CD4-positive, alpha-beta T cell (primary cell): ENCODE measurements at regions of chr1 and their contacts with region 1.

Region 1: DNA sequence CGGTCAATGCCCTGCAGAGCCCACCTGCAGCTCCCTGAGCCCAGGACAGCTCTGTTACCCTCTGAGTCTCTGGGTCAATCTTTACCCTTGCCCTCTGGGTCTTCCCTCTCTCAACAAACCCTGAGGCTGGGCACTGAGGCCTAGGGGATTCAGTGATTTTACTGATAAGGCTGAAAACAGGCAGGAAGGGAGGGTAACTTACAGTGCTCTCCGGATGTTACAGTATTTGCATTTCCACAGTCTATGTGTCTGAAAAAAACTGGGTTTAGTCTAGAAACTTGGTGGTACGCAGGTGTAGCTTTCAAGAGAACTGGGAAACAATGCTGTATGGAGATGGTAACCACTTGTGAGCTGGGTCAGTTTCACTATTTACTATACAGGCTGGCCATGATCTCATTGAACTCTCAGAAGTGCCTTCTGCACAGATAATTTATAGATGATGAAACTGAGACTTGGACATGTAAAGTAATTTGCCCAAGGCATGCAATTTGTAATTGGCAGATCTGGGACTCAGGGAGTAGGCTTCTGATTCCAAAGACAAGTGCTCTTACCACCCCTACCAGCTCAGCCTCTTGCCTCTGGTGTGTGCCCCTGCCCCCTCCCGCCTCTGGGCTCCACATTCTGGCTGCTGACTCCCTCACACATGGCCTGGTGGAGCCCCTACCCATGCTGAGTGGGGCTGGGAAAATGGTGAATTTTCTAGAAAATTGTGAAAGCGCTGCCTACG is 48.8 kb downstream of the TENT5C start:
- DNase-seq: peak in 3 of 14 experiments; percentile 43 to 62 (median 49)
- ATAC-seq: peak; percentile 13
- H3K4me3 ChIP-seq: peak overlapping the region; percentile 4
- H3K4me3 Mint-ChIP-seq: peak overlapping the region; percentile 71
- H3K27ac ChIP-seq: peak overlapping the region in 1 of 2 donors; percentile 43
- H3K27ac Mint-ChIP-seq: peak overlapping the region; percentile 84
- H3K4me1 ChIP-seq: peaks cover 94% of the 10 kb centered on the region
- H3K4me1 Mint-ChIP-seq: peaks cover 84% of the 10 kb centered on the region
- H3K27me3 ChIP-seq: no peaks in the 10 kb centered on the region
- H3K27me3 Mint-ChIP-seq: peaks cover 20% of the 10 kb centered on the region
- CTCF ChIP-seq: no peak

Region 2: GRCh38 chr1:117735045-117735992 is 80.7 kb after region 1 on chr1:
- CTCF ChIA-PET with region 1: no interaction called
- POLR2A ChIA-PET with region 1: interaction called, 7 read pairs
- intact Hi-C with region 1: loop called in 1 of 2 experiments (anchors 5 kb)
- DNase-seq: peak in 6 of 14 experiments; percentile 12 to 80 (median 54)
- ATAC-seq: peak; percentile 80
- H3K4me3 ChIP-seq: peak overlapping the region; percentile 50
- H3K4me3 Mint-ChIP-seq: peak overlapping the region; percentile 74
- H3K27ac ChIP-seq: peak overlapping the region; percentile 2 to 57
- H3K27ac Mint-ChIP-seq: peak overlapping the region; percentile 82
- H3K4me1 ChIP-seq: peaks cover 8% of the 10 kb centered on the region
- H3K4me1 Mint-ChIP-seq: peaks cover 24% of the 10 kb centered on the region
- H3K27me3 ChIP-seq: no peaks in the 10 kb centered on the region
- H3K27me3 Mint-ChIP-seq: no peaks in the 10 kb centered on the region
- CTCF ChIP-seq: no peak

Region 3: GRCh38 chr1:118039170-118039569 is 384.5 kb after region 1 on chr1:
- CTCF ChIA-PET with region 1: no interaction called
- POLR2A ChIA-PET with region 1: no interaction called
- intact Hi-C with region 1: no loop called
- DNase-seq: peak in 3 of 14 experiments; percentile 3 to 23 (median 10)
- ATAC-seq: no peak
- H3K4me3 ChIP-seq: no peak overlapping the region
- H3K4me3 Mint-ChIP-seq: no peak overlapping the region
- H3K27ac ChIP-seq: no peak overlapping the region
- H3K27ac Mint-ChIP-seq: no peak overlapping the region
- H3K4me1 ChIP-seq: no peaks in the 10 kb centered on the region
- H3K4me1 Mint-ChIP-seq: no peaks in the 10 kb centered on the region
- H3K27me3 ChIP-seq: no peaks in the 10 kb centered on the region
- H3K27me3 Mint-ChIP-seq: peaks cover 5% of the 10 kb centered on the region
- CTCF ChIP-seq: no peak